Colonic mucosa (tissue), 4 donors: ENCODE measurements at regions of chr4 and their contacts with region 1.

Region 1: DNA sequence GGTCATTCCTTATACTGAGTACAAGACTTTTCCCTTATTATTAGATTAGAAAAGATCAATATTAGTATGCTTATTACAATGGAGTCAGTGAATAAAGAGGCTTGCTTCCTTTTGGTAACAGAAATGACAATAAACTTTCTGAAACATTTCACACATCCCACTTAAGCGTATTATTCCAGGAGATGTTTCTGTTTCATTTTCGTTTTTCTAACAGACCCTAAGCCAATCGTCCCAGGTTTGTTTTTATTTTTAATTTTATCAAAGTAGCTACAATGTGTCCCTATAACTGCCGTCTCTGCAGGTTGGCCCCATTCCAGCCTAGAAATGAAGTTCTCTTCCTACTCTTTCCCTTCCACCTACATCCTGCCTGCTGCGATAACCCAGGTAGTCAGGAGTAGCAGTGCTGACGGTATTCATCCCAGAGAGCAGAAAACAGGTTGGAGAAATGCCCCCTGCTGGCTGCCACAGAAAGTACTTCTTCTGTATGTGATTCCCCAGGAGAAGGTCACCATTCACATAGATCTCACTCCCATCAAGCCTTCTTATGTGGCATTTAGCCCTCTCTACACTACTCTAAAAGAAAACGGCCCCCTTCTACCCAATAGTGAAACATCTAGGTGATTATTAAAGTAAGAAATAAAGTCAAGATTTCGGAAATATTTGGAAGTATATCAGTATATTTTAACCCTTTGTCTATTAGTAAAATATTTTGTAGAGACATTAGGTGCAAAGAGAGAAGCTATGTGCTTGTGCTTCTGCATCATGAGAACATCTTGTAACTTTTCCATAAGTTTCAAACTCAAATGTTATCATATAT is 40.4 kb downstream of the ENPEP start:
- DNase-seq: peak; percentile 85
- H3K4me3 ChIP-seq: peak overlapping the region; percentile 32
- H3K27ac ChIP-seq: peak overlapping the region; percentile 25
- H3K4me1 ChIP-seq: no peaks in the 10 kb centered on the region
- H3K27me3 ChIP-seq: no peaks in the 10 kb centered on the region
- CTCF ChIP-seq: peak; percentile 59

Region 2: DNA sequence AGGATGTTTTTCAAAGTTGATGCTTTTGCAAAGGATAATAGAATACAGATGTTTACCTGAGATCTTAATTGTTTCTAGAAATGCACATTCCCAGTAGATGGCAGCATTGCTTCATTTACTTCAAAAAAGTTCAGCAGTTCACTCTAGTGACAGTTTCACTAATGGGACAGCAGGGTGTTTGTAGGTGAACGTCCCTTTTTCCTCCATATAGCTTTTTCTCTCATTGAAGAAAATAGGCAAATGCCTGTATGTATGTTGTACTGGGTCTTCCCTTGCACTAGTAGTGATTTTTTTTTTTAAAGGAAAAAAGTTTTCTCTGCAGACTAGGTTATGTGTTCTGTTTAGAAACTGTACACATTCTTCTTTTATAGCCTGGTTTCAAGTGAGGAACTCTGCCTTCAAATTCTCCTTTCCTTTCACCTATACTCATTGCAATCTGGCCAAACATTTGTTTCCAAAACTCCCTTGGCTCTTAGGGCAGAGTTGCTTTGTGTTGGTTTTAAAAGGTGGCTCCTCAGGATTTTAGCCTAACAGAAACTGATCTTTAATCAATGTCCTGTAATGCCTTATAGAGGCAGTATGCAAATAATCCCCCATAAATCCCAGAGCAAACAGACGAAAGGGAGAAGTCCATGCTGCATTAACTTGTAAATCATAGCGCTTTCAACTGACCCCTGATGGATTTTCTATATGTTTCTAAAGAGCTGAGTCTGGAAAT is 517.3 kb before region 1 on chr4:
- intact Hi-C with region 1: loop called (anchors 2 kb)
- DNase-seq: peak; percentile 38
- H3K4me3 ChIP-seq: no peak overlapping the region
- H3K27ac ChIP-seq: no peak overlapping the region
- H3K4me1 ChIP-seq: peaks cover 4% of the 10 kb centered on the region
- H3K27me3 ChIP-seq: no peaks in the 10 kb centered on the region
- CTCF ChIP-seq: peak; percentile 66

Region 3: GRCh38 chr4:110042545-110043517 is 473.5 kb before region 1 on chr4:
- intact Hi-C with region 1: no loop called
- DNase-seq: no peak
- H3K4me3 ChIP-seq: no peak overlapping the region
- H3K27ac ChIP-seq: no peak overlapping the region
- H3K4me1 ChIP-seq: no peaks in the 10 kb centered on the region
- H3K27me3 ChIP-seq: no peaks in the 10 kb centered on the region
- CTCF ChIP-seq: no peak